Heart right ventricle (tissue), 16 donors: ENCODE measurements at regions of chr1 and their contacts with region 1.

Region 1: GRCh38 chr1:183281553-183282091 is 95.6 kb downstream of the LAMC2 start:
- DNase-seq: peak; percentile 89 to 94
- ATAC-seq: peak; percentile 85 to 93 (median 90)
- H3K4me3 ChIP-seq: peak overlapping the region in 4 of 10 donors; percentile 5 to 30 (median 14)
- H3K27ac ChIP-seq: peak overlapping the region; percentile 69 to 92 (median 84)
- H3K4me1 ChIP-seq: peaks cover 14 to 73% (median 61%) of the 10 kb centered on the region in 9 donors
- H3K27me3 ChIP-seq: no peaks in the 10 kb centered on the region
- CTCF ChIP-seq: peak; percentile 90 to 98 (median 95)

Region 2: DNA sequence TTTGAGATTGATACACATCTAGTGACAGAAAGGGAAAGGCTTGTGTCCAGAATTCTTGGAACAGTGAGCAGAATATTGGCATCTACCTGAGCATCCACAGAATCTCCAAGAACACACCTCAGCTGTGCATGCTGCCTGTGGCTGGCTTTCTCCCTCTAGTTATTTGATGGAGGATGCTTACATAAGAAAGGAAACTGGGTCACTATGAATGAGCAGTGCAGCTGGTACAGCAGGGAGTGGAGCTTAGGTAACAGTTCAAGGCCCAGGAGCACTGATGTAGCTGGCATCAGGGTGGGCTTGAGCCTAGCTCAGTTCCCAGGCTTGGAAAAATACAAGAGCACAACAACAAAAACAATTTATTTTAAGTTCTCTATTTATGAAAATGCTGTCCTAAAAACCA is 623.6 kb before region 1 on chr1:
- intact Hi-C with region 1: no loop called
- DNase-seq: no peak
- ATAC-seq: no peak
- H3K4me3 ChIP-seq: no peak overlapping the region
- H3K27ac ChIP-seq: no peak overlapping the region
- H3K4me1 ChIP-seq: no peaks in the 10 kb centered on the region
- H3K27me3 ChIP-seq: peaks cover 0 to 6% (median 0%) of the 10 kb centered on the region in 7 donors
- CTCF ChIP-seq: no peak

Region 3: GRCh38 chr1:183185941-183186490 is 95.6 kb before region 1 on chr1 and contains the start of gene LAMC2:
- intact Hi-C with region 1: no loop called
- DNase-seq: no peak
- ATAC-seq: peak in 7 of 8 donors; percentile 56 to 91 (median 73)
- H3K4me3 ChIP-seq: peak within 1 kb of the TSS in 9 of 10 donors; percentile 16 to 42 (median 26)
- H3K27ac ChIP-seq: no peak within 1 kb of the TSS
- H3K4me1 ChIP-seq: peaks cover 0 to 7% (median 5%) of the 10 kb centered on the region in 9 donors
- H3K27me3 ChIP-seq: peaks cover 0 to 16% (median 0%) of the 10 kb centered on the region in 7 donors
- CTCF ChIP-seq: peak in 4 of 9 donors; percentile 12 to 38 (median 32)
- total RNA-seq, gene LAMC2: 0.53 to 8.8 (median 1.6) TPM

Region 4: GRCh38 chr1:183244466-183244865 is 37.2 kb before region 1 on chr1:
- intact Hi-C with region 1: loop called in 1 of 10 experiments (anchors 5 kb)
- DNase-seq: peak; percentile 72 to 81
- ATAC-seq: peak in 7 of 8 donors; percentile 22 to 59 (median 54)
- H3K4me3 ChIP-seq: no peak overlapping the region
- H3K27ac ChIP-seq: peak overlapping the region; percentile 49 to 90 (median 76)
- H3K4me1 ChIP-seq: peaks cover 0 to 60% (median 37%) of the 10 kb centered on the region in 9 donors
- H3K27me3 ChIP-seq: no peaks in the 10 kb centered on the region
- CTCF ChIP-seq: no peak

Region 5: DNA sequence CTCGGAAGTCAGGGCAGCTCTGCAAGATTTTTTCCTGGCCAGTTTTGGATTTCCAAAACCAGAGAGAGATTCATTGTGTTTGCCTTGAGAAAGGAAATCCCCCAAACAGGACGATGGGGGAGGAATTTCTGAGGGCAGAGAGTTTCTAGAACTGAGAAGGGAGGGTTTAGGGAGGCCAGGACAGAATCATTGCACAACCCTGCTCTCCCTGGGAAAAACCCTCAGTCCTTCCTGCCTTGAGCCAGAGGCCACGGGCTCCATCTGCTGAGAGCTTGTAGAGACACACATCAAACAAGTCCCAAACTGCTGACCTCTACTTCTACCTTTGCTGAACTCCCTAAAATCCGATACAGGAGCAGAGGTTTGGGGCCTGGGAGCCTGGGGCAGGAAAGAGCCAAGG is 36.8 kb after region 1 on chr1:
- intact Hi-C with region 1: loop called (anchors 1 to 5 kb)
- DNase-seq: peak; percentile 73 to 86
- ATAC-seq: peak; percentile 94 to 98 (median 97)
- H3K4me3 ChIP-seq: no peak overlapping the region
- H3K27ac ChIP-seq: peak overlapping the region; percentile 47 to 89 (median 84)
- H3K4me1 ChIP-seq: peaks cover 7 to 35% (median 27%) of the 10 kb centered on the region in 9 donors
- H3K27me3 ChIP-seq: no peaks in the 10 kb centered on the region
- CTCF ChIP-seq: peak; percentile 48 to 90 (median 77)

Region 6: GRCh38 chr1:183461350-183461749 is 179.7 kb after region 1 on chr1:
- intact Hi-C with region 1: loop called in 1 of 10 experiments (anchors 10 kb)
- DNase-seq: peak in 1 of 2 donors; percentile 17
- ATAC-seq: peak in 1 of 8 donors; percentile 53
- H3K4me3 ChIP-seq: no peak overlapping the region
- H3K27ac ChIP-seq: peak overlapping the region in 1 of 10 donors; percentile 70
- H3K4me1 ChIP-seq: peaks cover 0 to 21% (median 0%) of the 10 kb centered on the region in 9 donors
- H3K27me3 ChIP-seq: peaks cover 0 to 4% (median 0%) of the 10 kb centered on the region in 7 donors
- CTCF ChIP-seq: no peak

Region 7: DNA sequence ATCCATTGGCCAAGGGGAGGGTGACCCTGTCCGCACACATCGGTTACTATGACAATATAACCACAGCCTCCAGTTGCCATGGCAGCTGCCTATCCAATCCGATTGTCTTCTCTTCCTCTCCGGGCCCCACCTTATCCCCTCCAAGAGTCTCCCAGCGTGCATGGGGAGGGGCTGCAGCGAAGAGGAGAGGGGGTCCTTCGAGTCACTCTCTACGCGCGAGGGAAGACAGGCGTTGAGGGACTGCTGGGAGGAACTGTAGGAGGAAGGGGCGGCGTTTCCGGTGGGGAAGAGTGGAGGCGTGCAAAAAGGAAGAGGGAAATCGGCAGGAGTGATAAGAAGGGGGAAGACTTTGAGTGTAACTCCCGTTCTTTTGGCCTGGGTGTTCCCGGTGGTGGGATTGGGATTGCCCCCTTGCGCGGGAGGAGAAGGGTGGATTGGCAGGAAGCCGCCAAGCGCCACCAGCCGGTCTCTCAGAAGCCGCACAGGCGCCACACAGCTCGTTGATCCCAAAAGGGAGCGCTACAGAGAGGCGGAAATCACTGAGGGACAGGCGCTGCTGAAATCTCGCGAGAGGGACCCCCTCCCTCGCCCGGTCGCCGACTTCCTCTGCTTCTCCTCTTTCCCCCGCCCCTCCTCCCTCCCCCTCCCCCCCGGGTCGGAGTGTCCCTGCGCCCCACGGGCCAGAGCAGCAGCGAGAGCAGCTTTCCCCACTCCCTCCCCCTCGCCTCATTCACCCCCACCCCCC is 190.3 kb after region 1 on chr1:
- intact Hi-C with region 1: loop called in 6 of 10 experiments (anchors 2 to 10 kb)
- DNase-seq: peak; percentile 98 to 99
- ATAC-seq: peak; percentile 84 to 93 (median 88)
- H3K4me3 ChIP-seq: peak overlapping the region; percentile 79 to 99 (median 96)
- H3K27ac ChIP-seq: peak overlapping the region; percentile 92 to 99 (median 96)
- H3K4me1 ChIP-seq: peaks cover 0 to 49% (median 41%) of the 10 kb centered on the region in 9 donors
- H3K27me3 ChIP-seq: no peaks in the 10 kb centered on the region
- CTCF ChIP-seq: peak in 5 of 9 donors; percentile 14 to 43 (median 25)

Region 8: GRCh38 chr1:183543619-183544204 is 262.1 kb after region 1 on chr1:
- intact Hi-C with region 1: loop called in 1 of 10 experiments (anchors 5 kb)
- DNase-seq: peak in 1 of 2 donors; percentile 20
- ATAC-seq: peak; percentile 72 to 83 (median 78)
- H3K4me3 ChIP-seq: no peak overlapping the region
- H3K27ac ChIP-seq: peak overlapping the region in 1 of 10 donors; percentile 54
- H3K4me1 ChIP-seq: peaks cover 0 to 43% (median 19%) of the 10 kb centered on the region in 9 donors
- H3K27me3 ChIP-seq: no peaks in the 10 kb centered on the region
- CTCF ChIP-seq: peak; percentile 16 to 73 (median 65)